IMR-90 (cell line): ENCODE measurements at regions of chr12 and their contacts with region 1.

Region 1: GRCh38 chr12:949453-950191 is at the start of gene RAD52:
- DNase-seq: peak; percentile 99
- ATAC-seq: peak; percentile 89
- H3K4me3 ChIP-seq: peak within 1 kb of the TSS; percentile 72
- H3K27ac ChIP-seq: peak within 1 kb of the TSS; percentile 86
- H3K4me1 ChIP-seq: peaks cover 4% of the 10 kb centered on the region
- H3K27me3 ChIP-seq: no peaks in the 10 kb centered on the region
- CTCF ChIP-seq: peak; percentile 97
- POLR2A ChIP-seq: peak; percentile 78; the same call in 1 of the 2 replicates
- RAD21 ChIP-seq: peak; percentile 83
- total RNA-seq, gene RAD52: 9.7 and 11.3 TPM in 2 replicates

Region 2: DNA sequence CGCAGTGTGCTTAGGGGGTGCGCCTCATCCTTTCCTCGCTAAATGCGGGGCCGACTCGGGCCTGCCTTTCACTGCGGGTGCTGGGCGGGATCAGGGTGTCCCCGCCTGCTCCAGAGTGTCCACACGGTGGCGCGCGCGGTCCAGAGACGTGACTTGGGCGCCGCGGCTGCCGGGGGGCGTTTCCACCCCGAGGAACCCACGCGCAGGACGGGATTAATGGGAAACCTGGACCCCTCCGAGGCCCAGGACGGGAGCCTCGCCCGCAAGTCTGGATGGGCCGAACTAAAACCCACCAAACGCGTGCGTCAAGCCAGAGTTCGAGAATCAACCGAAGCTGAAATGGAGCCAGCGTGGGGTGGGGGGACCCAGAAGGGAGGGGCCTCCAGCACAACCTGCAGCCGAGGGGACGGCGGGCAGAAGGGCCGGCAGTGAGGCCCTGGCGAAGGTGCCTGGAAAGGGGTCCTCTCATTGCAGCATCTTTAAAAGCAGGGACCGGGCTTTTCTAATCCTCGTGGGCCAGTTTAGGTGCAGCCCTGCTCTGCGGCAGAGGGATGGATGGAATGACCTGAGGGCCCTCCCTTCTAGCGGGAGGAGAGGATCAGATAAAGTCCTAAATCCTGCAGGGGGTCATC is 379.7 kb before region 1 on chr12:
- CTCF ChIA-PET with region 1: interaction called, 6 read pairs
- POLR2A ChIA-PET with region 1: no interaction called
- dilution Hi-C with region 1: no loop called
- in situ Hi-C with region 1: loop called (anchors 10 kb)
- intact Hi-C with region 1: loop called (anchors 1 kb)
- DNase-seq: peak; percentile 70
- ATAC-seq: peak; percentile 81
- H3K4me3 ChIP-seq: peak overlapping the region; percentile 65
- H3K27ac ChIP-seq: peak overlapping the region; percentile 60
- H3K4me1 ChIP-seq: peaks cover 14% of the 10 kb centered on the region
- H3K27me3 ChIP-seq: peaks cover 15% of the 10 kb centered on the region
- CTCF ChIP-seq: peak; percentile 94
- POLR2A ChIP-seq: no peak; the same call in 1 of the 2 replicates
- RAD21 ChIP-seq: peak; percentile 92

Region 3: GRCh38 chr12:575948-576612 is 373.5 kb before region 1 on chr12:
- CTCF ChIA-PET with region 1: interaction called, 6 read pairs
- POLR2A ChIA-PET with region 1: no interaction called
- dilution Hi-C with region 1: no loop called
- in situ Hi-C with region 1: loop called (anchors 10 kb)
- intact Hi-C with region 1: no loop called
- DNase-seq: peak; percentile 31
- ATAC-seq: peak; percentile 86
- H3K4me3 ChIP-seq: no peak overlapping the region; the same call in 1 of the 2 replicates
- H3K27ac ChIP-seq: no peak overlapping the region
- H3K4me1 ChIP-seq: peaks cover 12% of the 10 kb centered on the region
- H3K27me3 ChIP-seq: peaks cover 11% of the 10 kb centered on the region
- CTCF ChIP-seq: peak; percentile 92
- POLR2A ChIP-seq: no peak
- RAD21 ChIP-seq: peak; percentile 88

Region 4: GRCh38 chr12:990661-991349 is 41.2 kb after region 1 on chr12 and contains the start of gene ERC1:
- CTCF ChIA-PET with region 1: interaction called, 3 read pairs
- POLR2A ChIA-PET with region 1: interaction called, 8 read pairs
- dilution Hi-C with region 1: no loop called
- in situ Hi-C with region 1: no loop called
- intact Hi-C with region 1: loop called (anchors 2 kb)
- DNase-seq: peak; percentile 87
- ATAC-seq: peak; percentile 91
- H3K4me3 ChIP-seq: peak within 1 kb of the TSS; percentile 77
- H3K27ac ChIP-seq: peak within 1 kb of the TSS; percentile 96
- H3K4me1 ChIP-seq: peaks cover 8% of the 10 kb centered on the region
- H3K27me3 ChIP-seq: no peaks in the 10 kb centered on the region
- CTCF ChIP-seq: 0 out of 2 replicates have a peak, but pooled peaks have one; percentile 1
- POLR2A ChIP-seq: peak; percentile 92
- RAD21 ChIP-seq: no peak
- total RNA-seq, gene ERC1: 25.6 and 27.8 TPM in 2 replicates